ENCODE measurements at regions of chrX and their contacts with region 1.

Region 1: GRCh38 chrX:42992199-42992943 is 214.4 kb upstream of the PPP1R2C start:
- DNase-seq: peak; percentile 70
- H3K4me3 ChIP-seq: no peak overlapping the region
- H3K27ac ChIP-seq: peak overlapping the region; percentile 65
- H3K4me1 ChIP-seq: peaks cover 35% of the 10 kb centered on the region
- H3K27me3 ChIP-seq: no peaks in the 10 kb centered on the region
- CTCF ChIP-seq: no peak
- POLR2A ChIP-seq: peak; percentile 16

Region 2: GRCh38 chrX:42577936-42578485 is 414.4 kb before region 1 on chrX:
- CTCF ChIA-PET with region 1: no interaction called
- POLR2A ChIA-PET with region 1: no interaction called
- dilution Hi-C with region 1: no loop called
- intact Hi-C with region 1: loop called (anchors 1 kb)
- DNase-seq: peak; percentile 49
- H3K4me3 ChIP-seq: no peak overlapping the region
- H3K27ac ChIP-seq: peak overlapping the region; percentile 37
- H3K4me1 ChIP-seq: peaks cover 3% of the 10 kb centered on the region
- H3K27me3 ChIP-seq: no peaks in the 10 kb centered on the region
- CTCF ChIP-seq: no peak
- POLR2A ChIP-seq: no peak

Region 3: GRCh38 chrX:42746606-42747005 is 245.8 kb before region 1 on chrX:
- CTCF ChIA-PET with region 1: no interaction called
- POLR2A ChIA-PET with region 1: no interaction called
- dilution Hi-C with region 1: no loop called
- intact Hi-C with region 1: loop called (anchors 1 kb)
- DNase-seq: peak; percentile 86
- H3K4me3 ChIP-seq: no peak overlapping the region
- H3K27ac ChIP-seq: peak overlapping the region; percentile 20
- H3K4me1 ChIP-seq: peaks cover 26% of the 10 kb centered on the region
- H3K27me3 ChIP-seq: no peaks in the 10 kb centered on the region
- CTCF ChIP-seq: no peak
- POLR2A ChIP-seq: no peak

Measured in endothelial cell of umbilical vein (primary cell).